Naive thymus-derived CD4-positive, alpha-beta T cell (primary cell): ENCODE measurements at regions of chr15 and their contacts with region 1.

Region 1: DNA sequence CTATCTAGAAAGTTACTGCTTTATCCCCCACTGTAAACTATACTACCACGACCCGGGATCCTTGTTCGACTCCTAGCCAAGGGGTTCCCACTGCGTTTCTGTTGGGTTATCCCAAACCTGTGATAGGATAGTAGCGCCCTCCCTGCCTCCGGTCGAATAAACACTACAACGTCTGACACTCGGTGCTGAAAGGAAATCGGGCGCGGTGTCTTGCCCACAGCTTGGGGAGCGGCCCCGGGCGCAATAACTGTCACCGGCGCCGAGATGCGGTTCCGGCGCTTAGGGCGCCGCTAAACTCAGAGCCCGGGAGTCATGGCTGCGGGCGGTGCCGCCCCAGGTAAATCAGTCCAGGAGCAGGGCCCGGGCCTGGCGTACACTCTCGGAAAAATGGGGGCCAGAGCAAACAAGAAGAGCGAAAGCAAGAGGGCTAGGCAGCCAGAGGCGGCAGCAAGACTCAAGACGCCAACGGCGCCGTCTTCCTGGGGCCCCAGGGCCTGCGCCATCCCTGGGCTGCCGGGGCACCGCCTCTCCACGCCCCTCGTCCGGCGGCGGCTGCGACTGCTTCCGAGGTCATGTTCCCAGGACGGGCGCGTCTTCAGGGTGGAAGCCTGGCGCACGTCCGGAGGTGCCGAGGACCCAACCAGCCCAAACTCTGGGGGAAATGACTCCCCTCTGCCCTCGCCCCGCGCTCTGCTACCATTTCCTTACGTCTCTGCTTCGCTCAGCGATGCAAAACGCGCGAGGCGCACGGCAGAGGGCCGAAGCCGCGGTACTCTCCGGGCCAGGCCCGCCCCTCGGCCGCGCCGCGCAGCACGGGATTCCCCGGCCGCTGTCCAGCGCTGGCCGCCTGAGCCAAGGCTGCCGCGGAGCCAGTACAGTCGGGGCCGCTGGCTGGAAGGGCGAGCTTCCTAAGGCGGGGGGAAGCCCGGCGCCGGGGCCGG is at the start of gene DUT:
- DNase-seq: peak; percentile 65 to 85 (median 79)
- ATAC-seq: peak; percentile 87
- H3K4me3 ChIP-seq: peak within 1 kb of the TSS; percentile 87
- H3K4me3 Mint-ChIP-seq: peak within 1 kb of the TSS; percentile 94 to 100 (median 98)
- H3K27ac ChIP-seq: peak within 1 kb of the TSS; percentile 93
- H3K27ac Mint-ChIP-seq: peak within 1 kb of the TSS; percentile 94 to 100 (median 99)
- H3K4me1 ChIP-seq: peaks cover 12 to 13% of the 10 kb centered on the region in 2 donors
- H3K4me1 Mint-ChIP-seq: peaks cover 13 to 46% (median 24%) of the 10 kb centered on the region in 7 donors
- H3K27me3 ChIP-seq: no peaks in the 10 kb centered on the region
- H3K27me3 Mint-ChIP-seq: peaks cover 0 to 2% (median 0%) of the 10 kb centered on the region in 5 donors
- total RNA-seq, gene DUT: 54.7 to 219 (median 116) TPM

Region 2: DNA sequence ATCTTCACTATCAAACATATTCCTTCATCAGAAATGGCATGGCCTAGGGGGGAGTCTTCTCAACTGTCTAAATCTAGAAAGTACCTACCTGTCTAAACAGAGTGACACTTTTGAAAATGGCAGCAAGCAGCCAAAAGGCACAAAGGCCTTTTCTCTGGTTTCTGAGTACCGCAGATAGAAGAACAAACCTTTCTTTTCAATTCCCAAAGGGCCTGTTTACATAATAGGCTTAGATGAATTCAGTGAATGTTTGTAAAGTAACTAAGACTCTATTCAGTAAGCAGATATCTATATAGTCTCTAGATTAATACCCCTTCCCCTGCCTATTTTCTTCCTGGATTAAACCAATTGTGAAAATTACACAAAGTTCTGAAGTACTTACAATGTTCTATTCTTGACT is 160.1 kb before region 1 on chr15:
- CTCF ChIA-PET with region 1: no interaction called
- POLR2A ChIA-PET with region 1: no interaction called
- intact Hi-C with region 1: loop called (anchors 5 kb)
- DNase-seq: no peak
- ATAC-seq: no peak
- H3K4me3 ChIP-seq: no peak overlapping the region
- H3K4me3 Mint-ChIP-seq: no peak overlapping the region
- H3K27ac ChIP-seq: no peak overlapping the region
- H3K27ac Mint-ChIP-seq: no peak overlapping the region
- H3K4me1 ChIP-seq: no peaks in the 10 kb centered on the region
- H3K4me1 Mint-ChIP-seq: peaks cover 0 to 20% (median 0%) of the 10 kb centered on the region in 7 donors
- H3K27me3 ChIP-seq: no peaks in the 10 kb centered on the region
- H3K27me3 Mint-ChIP-seq: peaks cover 0 to 4% (median 0%) of the 10 kb centered on the region in 5 donors

Region 3: DNA sequence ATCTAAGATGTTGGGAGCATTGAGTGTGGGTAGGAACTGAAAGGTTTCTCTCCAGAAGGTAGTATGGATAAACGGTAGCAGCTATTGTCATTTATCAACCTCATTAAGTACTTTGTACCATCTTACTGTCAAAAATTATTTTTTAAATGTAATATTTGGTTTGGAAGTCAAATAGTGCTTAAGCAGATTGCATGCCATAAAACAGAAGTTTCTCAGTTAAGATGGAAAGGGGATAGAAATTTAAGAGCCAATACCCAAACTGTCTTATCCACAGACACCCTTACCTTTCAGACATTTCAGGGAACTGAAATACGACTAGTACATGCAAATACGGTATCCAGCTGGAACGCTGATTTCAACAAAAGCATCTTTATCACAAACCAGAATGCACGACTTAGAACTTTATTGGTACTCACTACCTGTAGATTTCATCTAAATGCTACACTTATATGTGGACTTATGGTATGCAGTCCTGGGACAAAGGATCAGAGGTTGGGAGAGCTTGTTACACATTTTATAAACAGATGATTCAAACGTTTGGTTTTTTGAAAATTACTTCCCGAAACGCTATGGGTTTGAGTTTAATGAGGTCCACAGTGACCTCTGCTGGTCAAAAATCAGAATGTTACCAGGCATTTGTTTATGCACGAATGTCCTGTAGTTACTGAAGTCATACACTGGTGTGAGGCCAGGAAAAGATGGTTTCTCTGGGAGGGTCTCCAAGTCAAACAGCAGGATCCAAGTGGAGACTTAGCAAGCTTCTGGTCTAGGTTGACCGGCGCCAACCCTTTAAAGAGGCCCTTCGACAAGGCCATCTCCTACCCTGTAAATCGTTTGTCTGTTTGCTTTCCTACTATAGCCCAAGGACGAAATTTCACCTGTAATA is 45.6 kb before region 1 on chr15:
- CTCF ChIA-PET with region 1: interaction called, 3 read pairs
- POLR2A ChIA-PET with region 1: no interaction called
- intact Hi-C with region 1: loop called in 1 of 2 experiments (anchors 5 kb)
- DNase-seq: peak in 8 of 9 donors; percentile 7 to 51 (median 34)
- ATAC-seq: peak; percentile 72
- H3K4me3 ChIP-seq: no peak overlapping the region
- H3K4me3 Mint-ChIP-seq: peak overlapping the region in 5 of 10 donors; percentile 23 to 53 (median 33)
- H3K27ac ChIP-seq: no peak overlapping the region
- H3K27ac Mint-ChIP-seq: peak overlapping the region in 1 of 9 donors; percentile 16
- H3K4me1 ChIP-seq: no peaks in the 10 kb centered on the region
- H3K4me1 Mint-ChIP-seq: peaks cover 0 to 12% (median 5%) of the 10 kb centered on the region in 7 donors
- H3K27me3 ChIP-seq: no peaks in the 10 kb centered on the region
- H3K27me3 Mint-ChIP-seq: peaks cover 0 to 20% (median 11%) of the 10 kb centered on the region in 5 donors

Region 4: GRCh38 chr15:48810414-48811317 is 479.5 kb after region 1 on chr15 and contains the start of gene CEP152:
- CTCF ChIA-PET with region 1: no interaction called
- POLR2A ChIA-PET with region 1: interaction called, 4 read pairs
- intact Hi-C with region 1: loop called (anchors 1 to 2 kb)
- DNase-seq: peak; percentile 91 to 99 (median 98)
- ATAC-seq: peak; percentile 98
- H3K4me3 ChIP-seq: peak within 1 kb of the TSS; percentile 78
- H3K4me3 Mint-ChIP-seq: peak within 1 kb of the TSS; percentile 82 to 96 (median 89)
- H3K27ac ChIP-seq: peak within 1 kb of the TSS; percentile 76
- H3K27ac Mint-ChIP-seq: peak within 1 kb of the TSS; percentile 14 to 96 (median 87)
- H3K4me1 ChIP-seq: peaks cover 9 to 13% of the 10 kb centered on the region in 2 donors
- H3K4me1 Mint-ChIP-seq: peaks cover 12 to 38% (median 33%) of the 10 kb centered on the region in 7 donors
- H3K27me3 ChIP-seq: no peaks in the 10 kb centered on the region
- H3K27me3 Mint-ChIP-seq: peaks cover 0 to 24% (median 0%) of the 10 kb centered on the region in 5 donors
- total RNA-seq, gene CEP152: 6.2 to 26.3 (median 17.0) TPM

Region 5: GRCh38 chr15:49155110-49155833 is 824.1 kb after region 1 on chr15 and contains the start of gene COPS2:
- CTCF ChIA-PET with region 1: no interaction called
- POLR2A ChIA-PET with region 1: interaction called, 3 read pairs
- intact Hi-C with region 1: loop called (anchors 1 to 2 kb)
- DNase-seq: peak; percentile 69 to 96 (median 94)
- ATAC-seq: peak; percentile 99
- H3K4me3 ChIP-seq: peak within 1 kb of the TSS; percentile 88
- H3K4me3 Mint-ChIP-seq: peak within 1 kb of the TSS; percentile 95 to 100 (median 98)
- H3K27ac ChIP-seq: peak within 1 kb of the TSS; percentile 93
- H3K27ac Mint-ChIP-seq: peak within 1 kb of the TSS; percentile 93 to 100 (median 97)
- H3K4me1 ChIP-seq: peaks cover 9 to 25% of the 10 kb centered on the region in 2 donors
- H3K4me1 Mint-ChIP-seq: peaks cover 40 to 72% (median 59%) of the 10 kb centered on the region in 7 donors
- H3K27me3 ChIP-seq: no peaks in the 10 kb centered on the region
- H3K27me3 Mint-ChIP-seq: no peaks in the 10 kb centered on the region
- total RNA-seq, gene COPS2: 51.0 to 91.5 (median 63.6) TPM